ENCODE measurements at regions of chr1 and their contacts with region 1.

Region 1: GRCh38 chr1:155277070-155277895 is at the start of gene HCN3:
- DNase-seq: peak; percentile 68 to 94 (median 82)
- ATAC-seq: peak; percentile 34 to 62
- H3K4me3 Mint-ChIP-seq: peak within 1 kb of the TSS; percentile 68 to 84 (median 78)
- H3K27ac Mint-ChIP-seq: peak within 1 kb of the TSS in 8 of 10 donors; percentile 23 to 88 (median 67)
- H3K4me1 Mint-ChIP-seq: peaks cover 16 to 42% (median 36%) of the 10 kb centered on the region in 4 donors
- H3K27me3 Mint-ChIP-seq: no peaks in the 10 kb centered on the region
- polyA plus RNA-seq, gene HCN3: 0.20 to 0.51 TPM in 2 of 3 donors, not detected in the other

Region 2: GRCh38 chr1:155261852-155262673 is 15.2 kb before region 1 on chr1 and contains the start of gene SCAMP3:
- POLR2A ChIA-PET with region 1: interaction called, 39 read pairs
- DNase-seq: peak; percentile 65 to 93 (median 82)
- ATAC-seq: peak; percentile 97 to 98
- H3K4me3 Mint-ChIP-seq: peak within 1 kb of the TSS; percentile 94 to 99 (median 98)
- H3K27ac Mint-ChIP-seq: peak within 1 kb of the TSS; percentile 94 to 99 (median 97)
- H3K4me1 Mint-ChIP-seq: peaks cover 21 to 41% (median 29%) of the 10 kb centered on the region in 4 donors
- H3K27me3 Mint-ChIP-seq: no peaks in the 10 kb centered on the region
- polyA plus RNA-seq, gene SCAMP3: 124 to 189 (median 138) TPM

Region 3: GRCh38 chr1:155308493-155309422 is 31.5 kb after region 1 on chr1 and contains the start of gene FDPS:
- POLR2A ChIA-PET with region 1: interaction called, 10 read pairs
- DNase-seq: peak; percentile 88 to 98 (median 96)
- ATAC-seq: peak; percentile 98
- H3K4me3 Mint-ChIP-seq: peak within 1 kb of the TSS; percentile 90 to 99 (median 96)
- H3K27ac Mint-ChIP-seq: peak within 1 kb of the TSS; percentile 91 to 98 (median 96)
- H3K4me1 Mint-ChIP-seq: peaks cover 12 to 36% (median 25%) of the 10 kb centered on the region in 4 donors
- H3K27me3 Mint-ChIP-seq: no peaks in the 10 kb centered on the region
- polyA plus RNA-seq, gene FDPS: 97.2 to 120 (median 105) TPM

Measured in naive thymus-derived CD8-positive, alpha-beta T cell (primary cell).